CD4-positive, alpha-beta memory T cell (primary cell): ENCODE measurements at regions of chr1 and their contacts with region 1.

Region 1: GRCh38 chr1:110619412-110620249 is 13.5 kb upstream of the KCNA2 start:
- DNase-seq: peak; percentile 86 to 92 (median 91)
- H3K4me3 ChIP-seq: peak overlapping the region; percentile 60 to 77
- H3K4me3 Mint-ChIP-seq: peak overlapping the region; percentile 86 to 97 (median 91)
- H3K27ac ChIP-seq: peak overlapping the region; percentile 50
- H3K27ac Mint-ChIP-seq: peak overlapping the region; percentile 90 to 99 (median 97)
- H3K4me1 ChIP-seq: peaks cover 33% of the 10 kb centered on the region
- H3K4me1 Mint-ChIP-seq: peaks cover 32 to 50% (median 38%) of the 10 kb centered on the region in 4 donors
- H3K27me3 ChIP-seq: no peaks in the 10 kb centered on the region
- H3K27me3 Mint-ChIP-seq: no peaks in the 10 kb centered on the region

Region 2: GRCh38 chr1:110412576-110412975 is 207.1 kb before region 1 on chr1:
- CTCF ChIA-PET with region 1: interaction called, 4 read pairs
- POLR2A ChIA-PET with region 1: interaction called, 3 read pairs
- intact Hi-C with region 1: loop called (anchors 5 kb)
- DNase-seq: peak; percentile 52 to 63 (median 56)
- H3K4me3 ChIP-seq: no peak overlapping the region
- H3K4me3 Mint-ChIP-seq: no peak overlapping the region
- H3K27ac ChIP-seq: no peak overlapping the region
- H3K27ac Mint-ChIP-seq: peak overlapping the region in 4 of 7 donors; percentile 5 to 84 (median 49)
- H3K4me1 ChIP-seq: peaks cover 15% of the 10 kb centered on the region
- H3K4me1 Mint-ChIP-seq: peaks cover 10 to 19% (median 13%) of the 10 kb centered on the region in 4 donors
- H3K27me3 ChIP-seq: no peaks in the 10 kb centered on the region
- H3K27me3 Mint-ChIP-seq: no peaks in the 10 kb centered on the region

Region 3: DNA sequence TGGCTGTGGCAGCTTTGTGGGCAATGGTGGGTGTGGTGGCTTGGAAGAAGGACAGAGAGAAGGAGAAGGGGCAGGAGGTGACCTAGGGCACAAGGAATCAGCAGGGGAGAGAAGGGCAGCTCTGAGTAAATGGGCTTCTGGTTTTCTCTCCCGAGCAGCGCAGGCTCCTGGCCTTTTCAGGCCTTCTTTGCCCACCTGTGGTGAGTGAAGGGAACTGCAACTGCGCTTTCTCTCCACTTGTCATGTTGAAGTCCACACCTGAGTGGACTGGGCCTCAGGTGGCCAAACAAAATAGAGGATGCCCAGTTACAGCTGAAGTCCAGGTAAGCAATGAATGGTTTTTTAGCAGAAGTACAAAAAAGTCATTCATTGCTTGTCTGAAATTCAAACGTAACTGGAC is 71.2 kb before region 1 on chr1:
- CTCF ChIA-PET with region 1: no interaction called
- POLR2A ChIA-PET with region 1: no interaction called
- intact Hi-C with region 1: no loop called
- DNase-seq: no peak
- H3K4me3 ChIP-seq: no peak overlapping the region
- H3K4me3 Mint-ChIP-seq: no peak overlapping the region
- H3K27ac ChIP-seq: no peak overlapping the region
- H3K27ac Mint-ChIP-seq: no peak overlapping the region
- H3K4me1 ChIP-seq: no peaks in the 10 kb centered on the region
- H3K4me1 Mint-ChIP-seq: no peaks in the 10 kb centered on the region
- H3K27me3 ChIP-seq: no peaks in the 10 kb centered on the region
- H3K27me3 Mint-ChIP-seq: peaks cover 15 to 25% of the 10 kb centered on the region in 2 donors

Region 4: DNA sequence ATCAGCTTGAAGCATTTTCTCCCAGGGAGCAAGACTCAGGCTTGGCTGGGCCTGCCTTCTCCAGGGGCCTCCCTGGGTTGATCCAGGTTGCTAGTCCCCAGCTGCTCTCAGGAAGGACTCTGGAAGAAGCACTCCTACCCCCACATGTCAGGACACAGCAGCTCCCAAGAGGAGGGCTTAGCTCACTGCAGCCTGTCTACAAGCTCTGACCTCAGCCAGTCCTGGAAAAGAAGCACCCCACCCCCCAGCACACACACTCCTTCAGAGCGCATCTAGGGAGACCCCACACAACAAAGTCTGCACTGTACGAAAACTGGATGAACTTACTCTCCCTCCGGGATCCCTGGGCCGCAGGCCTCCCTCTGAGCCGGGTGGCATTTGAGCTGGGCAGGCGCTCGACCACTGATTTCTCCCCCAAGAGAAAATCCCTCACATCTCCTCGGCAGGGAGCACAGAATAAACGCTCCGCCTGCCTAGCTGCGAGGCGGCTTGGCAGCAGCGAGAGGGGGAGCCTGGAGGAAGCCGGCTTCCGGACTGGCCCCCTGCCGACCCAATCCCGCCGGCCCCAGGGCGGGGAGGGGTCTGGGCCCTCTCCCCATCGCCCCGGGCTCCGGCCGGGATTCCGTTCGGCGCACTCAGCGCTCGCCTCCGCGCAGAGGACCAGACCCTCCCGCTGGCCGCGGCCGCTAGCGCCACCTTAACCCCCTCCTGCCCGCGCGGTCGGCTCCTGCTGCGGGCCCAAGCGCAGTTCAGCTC is 13.6 kb before region 1 on chr1 and contains the start of gene KCNA2:
- CTCF ChIA-PET with region 1: interaction called, 34 read pairs
- POLR2A ChIA-PET with region 1: interaction called, 13 read pairs
- intact Hi-C with region 1: no loop called
- DNase-seq: peak in 1 of 5 donors; percentile 15
- H3K4me3 ChIP-seq: peak within 1 kb of the TSS; percentile 54 to 59
- H3K4me3 Mint-ChIP-seq: peak within 1 kb of the TSS; percentile 81 to 90 (median 84)
- H3K27ac ChIP-seq: no peak within 1 kb of the TSS
- H3K27ac Mint-ChIP-seq: peak within 1 kb of the TSS in 1 of 7 donors; percentile 47
- H3K4me1 ChIP-seq: peaks cover 21% of the 10 kb centered on the region
- H3K4me1 Mint-ChIP-seq: peaks cover 6 to 30% (median 16%) of the 10 kb centered on the region in 4 donors
- H3K27me3 ChIP-seq: peaks cover 31% of the 10 kb centered on the region
- H3K27me3 Mint-ChIP-seq: peaks cover 25 to 47% of the 10 kb centered on the region in 2 donors
- total RNA-seq, gene KCNA2: 1.2 to 2.2 TPM

Region 5: GRCh38 chr1:110645821-110646735 is 26.4 kb after region 1 on chr1:
- CTCF ChIA-PET with region 1: interaction called, 28 read pairs
- POLR2A ChIA-PET with region 1: interaction called, 26 read pairs
- intact Hi-C with region 1: no loop called
- DNase-seq: no peak
- H3K4me3 ChIP-seq: peak overlapping the region in 1 of 2 donors; percentile 2
- H3K4me3 Mint-ChIP-seq: peak overlapping the region in 5 of 8 donors; percentile 21 to 66 (median 44)
- H3K27ac ChIP-seq: peak overlapping the region; percentile 56
- H3K27ac Mint-ChIP-seq: peak overlapping the region in 6 of 7 donors; percentile 31 to 83 (median 62)
- H3K4me1 ChIP-seq: peaks cover 99% of the 10 kb centered on the region
- H3K4me1 Mint-ChIP-seq: peaks cover 11 to 51% (median 40%) of the 10 kb centered on the region in 4 donors
- H3K27me3 ChIP-seq: no peaks in the 10 kb centered on the region
- H3K27me3 Mint-ChIP-seq: no peaks in the 10 kb centered on the region

Region 6: GRCh38 chr1:110756506-110756905 is 136.9 kb after region 1 on chr1:
- CTCF ChIA-PET with region 1: interaction called, 273 read pairs
- POLR2A ChIA-PET with region 1: interaction called, 4 read pairs
- intact Hi-C with region 1: no loop called
- DNase-seq: no peak
- H3K4me3 ChIP-seq: no peak overlapping the region
- H3K4me3 Mint-ChIP-seq: no peak overlapping the region
- H3K27ac ChIP-seq: no peak overlapping the region
- H3K27ac Mint-ChIP-seq: no peak overlapping the region
- H3K4me1 ChIP-seq: no peaks in the 10 kb centered on the region
- H3K4me1 Mint-ChIP-seq: no peaks in the 10 kb centered on the region
- H3K27me3 ChIP-seq: peaks cover 5% of the 10 kb centered on the region
- H3K27me3 Mint-ChIP-seq: peaks cover 8 to 20% of the 10 kb centered on the region in 2 donors

Region 7: GRCh38 chr1:110829955-110830553 is 210.4 kb after region 1 on chr1:
- CTCF ChIA-PET with region 1: interaction called, 18 read pairs
- POLR2A ChIA-PET with region 1: no interaction called
- intact Hi-C with region 1: loop called (anchors 1 kb)
- DNase-seq: peak; percentile 41 to 63 (median 57)
- H3K4me3 ChIP-seq: no peak overlapping the region
- H3K4me3 Mint-ChIP-seq: no peak overlapping the region
- H3K27ac ChIP-seq: no peak overlapping the region
- H3K27ac Mint-ChIP-seq: peak overlapping the region in 1 of 7 donors; percentile 42
- H3K4me1 ChIP-seq: peaks cover 7% of the 10 kb centered on the region
- H3K4me1 Mint-ChIP-seq: peaks cover 5 to 8% (median 7%) of the 10 kb centered on the region in 4 donors
- H3K27me3 ChIP-seq: no peaks in the 10 kb centered on the region
- H3K27me3 Mint-ChIP-seq: peaks cover 0 to 10% of the 10 kb centered on the region in 2 donors